Heart left ventricle (tissue), 16 donors: ENCODE measurements at regions of chr1 and their contacts with region 1.

Region 1: GRCh38 chr1:185156854-185157598 is at the starts of genes SWT1 and TRMT1L:
- DNase-seq: peak; percentile 99 to 100 (median 99)
- ATAC-seq: peak; percentile 96 to 98 (median 98)
- H3K4me3 ChIP-seq: peak within 1 kb of the TSS; percentile 70 to 92 (median 80)
- H3K27ac ChIP-seq: peak within 1 kb of the TSS; percentile 86 to 99 (median 97)
- H3K4me1 ChIP-seq: peaks cover 0 to 55% (median 34%) of the 10 kb centered on the region in 12 donors
- H3K27me3 ChIP-seq: no peaks in the 10 kb centered on the region
- CTCF ChIP-seq: no peak
- POLR2A ChIP-seq: peak; percentile 91 to 98
- total RNA-seq, gene SWT1: 3.9 to 8.5 (median 5.5) TPM
- total RNA-seq, gene TRMT1L: 21.6 to 42.3 (median 30.8) TPM

Region 2: GRCh38 chr1:184754476-184755225 is 402.4 kb before region 1 on chr1 and contains the start of gene EDEM3:
- intact Hi-C with region 1: loop called in 3 of 10 experiments (anchors 2 kb)
- DNase-seq: peak; percentile 99 to 100 (median 100)
- ATAC-seq: peak; percentile 98 to 99 (median 99)
- H3K4me3 ChIP-seq: peak within 1 kb of the TSS; percentile 61 to 98 (median 88)
- H3K27ac ChIP-seq: peak within 1 kb of the TSS; percentile 79 to 97 (median 93)
- H3K4me1 ChIP-seq: peaks cover 0 to 41% (median 19%) of the 10 kb centered on the region in 12 donors
- H3K27me3 ChIP-seq: no peaks in the 10 kb centered on the region
- CTCF ChIP-seq: no peak
- POLR2A ChIP-seq: peak; percentile 89 to 96
- total RNA-seq, gene EDEM3: 14.3 to 28.6 (median 18.8) TPM

Region 3: GRCh38 chr1:184805667-184806295 is 351.2 kb before region 1 on chr1:
- intact Hi-C with region 1: loop called in 8 of 10 experiments (anchors 10 kb)
- DNase-seq: peak; percentile 86 to 93 (median 87)
- ATAC-seq: peak; percentile 87 to 96 (median 95)
- H3K4me3 ChIP-seq: no peak overlapping the region
- H3K27ac ChIP-seq: peak overlapping the region in 9 of 12 donors; percentile 0 to 68 (median 28)
- H3K4me1 ChIP-seq: peaks cover 0 to 21% (median 7%) of the 10 kb centered on the region in 12 donors
- H3K27me3 ChIP-seq: no peaks in the 10 kb centered on the region
- CTCF ChIP-seq: peak; percentile 87 to 97 (median 93)
- POLR2A ChIP-seq: no peak

Region 4: GRCh38 chr1:184973272-184974055 is 183.6 kb before region 1 on chr1:
- intact Hi-C with region 1: loop called in 1 of 10 experiments (anchors 10 kb)
- DNase-seq: peak; percentile 51 to 74 (median 68)
- ATAC-seq: peak; percentile 10 to 76 (median 60)
- H3K4me3 ChIP-seq: peak overlapping the region; percentile 65 to 98 (median 83)
- H3K27ac ChIP-seq: peak overlapping the region; percentile 74 to 94 (median 92)
- H3K4me1 ChIP-seq: peaks cover 0 to 52% (median 20%) of the 10 kb centered on the region in 12 donors
- H3K27me3 ChIP-seq: no peaks in the 10 kb centered on the region
- CTCF ChIP-seq: no peak
- POLR2A ChIP-seq: no peak

Region 5: GRCh38 chr1:184982002-184982954 is 174.7 kb before region 1 on chr1:
- intact Hi-C with region 1: loop called in 2 of 10 experiments (anchors 10 kb)
- DNase-seq: peak; percentile 74 to 87 (median 78)
- ATAC-seq: peak; percentile 94 to 98 (median 97)
- H3K4me3 ChIP-seq: no peak overlapping the region
- H3K27ac ChIP-seq: peak overlapping the region in 1 of 12 donors; percentile 3
- H3K4me1 ChIP-seq: peaks cover 0 to 9% (median 0%) of the 10 kb centered on the region in 12 donors
- H3K27me3 ChIP-seq: no peaks in the 10 kb centered on the region
- CTCF ChIP-seq: peak; percentile 82 to 98 (median 95)
- POLR2A ChIP-seq: no peak

Region 6: DNA sequence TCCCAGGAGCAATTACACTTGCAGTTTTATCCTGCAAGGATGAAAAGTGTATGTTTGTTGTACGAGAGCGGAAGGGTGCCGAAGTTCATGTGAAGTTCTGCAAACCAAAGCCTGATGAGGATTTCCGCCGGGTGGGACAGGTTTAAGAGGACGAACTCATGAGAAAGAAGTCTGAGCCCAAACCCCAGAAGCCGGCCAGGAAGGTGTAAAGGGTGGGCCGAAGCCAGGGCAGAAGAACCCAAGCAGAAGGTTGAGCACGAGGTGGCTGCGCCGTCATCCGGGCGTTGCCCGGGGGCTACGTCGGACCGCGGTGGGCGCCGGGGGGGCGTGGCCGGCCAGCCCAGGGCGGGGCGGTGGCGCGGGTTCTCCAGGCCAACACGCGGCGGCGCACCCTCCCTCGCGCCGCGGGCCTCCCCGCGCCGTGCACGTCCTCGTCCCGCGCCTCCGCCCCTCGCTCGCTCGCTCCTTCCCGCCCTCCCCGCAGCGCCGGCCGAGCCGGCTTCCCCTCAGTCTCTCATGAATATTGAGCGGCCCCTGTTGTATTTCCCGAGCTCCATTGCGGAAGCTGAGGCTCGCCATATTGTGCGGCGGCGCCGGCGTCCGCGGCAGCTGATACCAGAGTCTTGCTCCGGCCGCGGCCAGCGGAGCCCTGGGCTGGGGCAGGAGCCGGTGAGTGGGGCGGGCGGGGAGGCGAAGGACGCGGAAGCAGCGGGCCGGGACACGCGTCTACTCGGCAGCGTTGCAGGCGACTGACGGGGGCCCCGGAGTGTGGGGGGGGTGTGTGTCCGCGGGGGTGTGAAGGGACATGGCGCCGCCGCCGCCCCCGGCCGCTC is 111.8 kb before region 1 on chr1 and contains the start of gene RNF2:
- intact Hi-C with region 1: loop called in 4 of 10 experiments (anchors 2 to 5 kb)
- DNase-seq: peak; percentile 86 to 92 (median 87)
- ATAC-seq: peak; percentile 86 to 96 (median 94)
- H3K4me3 ChIP-seq: peak within 1 kb of the TSS; percentile 62 to 95 (median 84)
- H3K27ac ChIP-seq: peak within 1 kb of the TSS; percentile 72 to 92 (median 88)
- H3K4me1 ChIP-seq: peaks cover 0 to 33% (median 21%) of the 10 kb centered on the region in 12 donors
- H3K27me3 ChIP-seq: no peaks in the 10 kb centered on the region
- CTCF ChIP-seq: peak in 4 of 12 donors; percentile 17 to 29 (median 22)
- POLR2A ChIP-seq: peak in 1 of 2 donors; percentile 36
- total RNA-seq, gene RNF2: 10.6 to 18.6 (median 14.3) TPM

Region 7: DNA sequence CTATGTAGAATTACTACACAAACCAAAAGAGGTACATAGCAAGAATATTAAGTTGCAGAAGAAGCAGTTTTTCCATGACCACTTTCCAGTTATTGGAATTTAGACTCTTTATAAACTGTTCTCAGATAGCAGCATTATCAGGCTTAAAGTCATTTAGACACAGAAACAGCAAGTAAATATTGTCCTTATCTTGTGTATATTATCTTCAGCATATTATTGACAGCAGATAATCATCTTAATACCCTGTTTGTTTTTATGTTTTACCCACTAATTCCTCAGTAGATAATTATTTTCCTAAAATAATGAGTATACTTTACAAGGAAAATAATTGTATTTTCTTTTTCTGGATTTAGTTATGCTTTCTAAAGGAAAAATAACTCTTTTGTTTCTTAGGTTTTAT is 20.3 kb after region 1 on chr1:
- intact Hi-C with region 1: no loop called
- DNase-seq: no peak
- ATAC-seq: no peak
- H3K4me3 ChIP-seq: no peak overlapping the region
- H3K27ac ChIP-seq: no peak overlapping the region
- H3K4me1 ChIP-seq: no peaks in the 10 kb centered on the region
- H3K27me3 ChIP-seq: no peaks in the 10 kb centered on the region
- CTCF ChIP-seq: no peak
- POLR2A ChIP-seq: no peak

Region 8: GRCh38 chr1:186375088-186375953 is 1218.3 kb after region 1 on chr1 and contains the starts of genes ODR4 and TPR:
- intact Hi-C with region 1: loop called in 1 of 10 experiments (anchors 5 kb)
- DNase-seq: peak; percentile 97 to 99 (median 98)
- ATAC-seq: peak; percentile 95 to 98 (median 96)
- H3K4me3 ChIP-seq: peak within 1 kb of the TSS; percentile 70 to 94 (median 85)
- H3K27ac ChIP-seq: peak within 1 kb of the TSS; percentile 90 to 99 (median 96)
- H3K4me1 ChIP-seq: peaks cover 7 to 39% (median 26%) of the 10 kb centered on the region in 12 donors
- H3K27me3 ChIP-seq: no peaks in the 10 kb centered on the region
- CTCF ChIP-seq: peak; percentile 68 to 98 (median 86)
- POLR2A ChIP-seq: peak; percentile 31 to 88
- total RNA-seq, gene ODR4: 8.7 to 15.5 (median 11.3) TPM
- total RNA-seq, gene TPR: 43.5 to 90.8 (median 55.0) TPM